Psoas muscle (tissue), 8 donors: ENCODE measurements at regions of chr20 and their contacts with region 1.

Region 1: DNA sequence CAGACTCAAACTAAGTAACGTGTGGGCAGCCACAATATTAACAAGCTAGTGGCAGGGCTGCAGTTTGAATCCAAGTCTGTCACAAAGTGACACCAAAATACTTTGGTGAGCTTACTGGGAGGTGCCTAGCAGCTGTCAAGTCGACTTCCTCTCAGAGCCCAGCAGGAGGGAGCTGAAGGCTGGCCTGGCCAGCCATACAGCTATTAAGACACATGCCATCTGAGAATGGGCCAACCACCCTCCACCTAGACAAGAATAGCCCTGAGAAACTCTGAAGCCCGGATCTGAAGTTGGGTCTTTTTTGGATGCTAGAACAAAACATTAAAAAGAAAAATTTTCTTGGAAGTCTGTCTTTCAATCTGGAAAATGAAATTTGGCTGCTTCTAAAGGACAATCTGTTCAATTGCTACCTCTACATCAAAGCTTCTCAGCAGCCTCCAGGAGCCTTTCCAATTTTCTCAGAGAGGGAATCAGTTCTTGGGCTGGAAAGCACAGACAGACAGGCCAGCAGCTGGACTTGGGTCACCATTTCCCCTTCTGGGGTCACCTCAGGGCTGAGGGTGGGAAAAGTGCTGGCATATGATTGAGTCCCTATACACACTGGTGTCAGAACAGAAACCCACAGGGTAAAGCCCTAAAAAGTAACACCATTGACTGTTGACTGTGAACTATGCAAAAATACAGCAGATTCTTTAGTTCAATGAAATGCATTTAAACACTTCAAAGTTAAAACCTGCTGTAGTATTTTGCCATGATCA is 42.9 kb downstream of the UQCC1 start:
- DNase-seq: peak; percentile 54 to 79
- ATAC-seq: peak; percentile 98 to 99 (median 99)
- H3K4me3 ChIP-seq: peak overlapping the region; percentile 14
- H3K27ac ChIP-seq: peak overlapping the region; percentile 90
- H3K4me1 ChIP-seq: peaks cover 23% of the 10 kb centered on the region
- H3K27me3 ChIP-seq: no peaks in the 10 kb centered on the region
- CTCF ChIP-seq: no peak

Region 2: GRCh38 chr20:35329435-35330139 is 39.3 kb before region 1 on chr20:
- intact Hi-C with region 1: loop called in 1 of 2 experiments (anchors 5 kb)
- DNase-seq: peak; percentile 42 to 60
- ATAC-seq: peak; percentile 72 to 81 (median 76)
- H3K4me3 ChIP-seq: no peak overlapping the region
- H3K27ac ChIP-seq: no peak overlapping the region
- H3K4me1 ChIP-seq: peaks cover 30% of the 10 kb centered on the region
- H3K27me3 ChIP-seq: no peaks in the 10 kb centered on the region
- CTCF ChIP-seq: peak; percentile 47

Region 3: GRCh38 chr20:35410613-35411012 is 41.8 kb after region 1 on chr20:
- intact Hi-C with region 1: loop called in 1 of 2 experiments (anchors 2 kb)
- DNase-seq: no peak
- ATAC-seq: no peak
- H3K4me3 ChIP-seq: peak overlapping the region; percentile 95
- H3K27ac ChIP-seq: peak overlapping the region; percentile 84
- H3K4me1 ChIP-seq: peaks cover 3% of the 10 kb centered on the region
- H3K27me3 ChIP-seq: no peaks in the 10 kb centered on the region
- CTCF ChIP-seq: no peak